ENCODE measurements at regions of chr11 and their contacts with region 1.

Region 1: GRCh38 chr11:4060182-4060923 is 34.2 kb upstream of the RRM1 start:
- DNase-seq: no peak
- H3K4me3 Mint-ChIP-seq: no peak overlapping the region
- H3K27ac Mint-ChIP-seq: no peak overlapping the region
- H3K4me1 Mint-ChIP-seq: peaks cover 25% of the 10 kb centered on the region
- H3K27me3 Mint-ChIP-seq: no peaks in the 10 kb centered on the region

Region 2: GRCh38 chr11:3849297-3849874 is 211.0 kb before region 1 on chr11:
- CTCF ChIA-PET with region 1: interaction called, 554 read pairs
- POLR2A ChIA-PET with region 1: interaction called, 26 read pairs
- DNase-seq: peak; percentile 48
- H3K4me3 Mint-ChIP-seq: no peak overlapping the region
- H3K27ac Mint-ChIP-seq: no peak overlapping the region
- H3K4me1 Mint-ChIP-seq: peaks cover 33% of the 10 kb centered on the region
- H3K27me3 Mint-ChIP-seq: peaks cover 3% of the 10 kb centered on the region

Region 3: GRCh38 chr11:3995949-3996554 is 64.3 kb before region 1 on chr11:
- CTCF ChIA-PET with region 1: no interaction called
- POLR2A ChIA-PET with region 1: no interaction called
- DNase-seq: no peak
- H3K4me3 Mint-ChIP-seq: no peak overlapping the region
- H3K27ac Mint-ChIP-seq: no peak overlapping the region
- H3K4me1 Mint-ChIP-seq: peaks cover 25% of the 10 kb centered on the region
- H3K27me3 Mint-ChIP-seq: no peaks in the 10 kb centered on the region